Left ventricle myocardium superior (tissue), 1 donor: ENCODE measurements at regions of chr11 and their contacts with region 1.

Region 1: DNA sequence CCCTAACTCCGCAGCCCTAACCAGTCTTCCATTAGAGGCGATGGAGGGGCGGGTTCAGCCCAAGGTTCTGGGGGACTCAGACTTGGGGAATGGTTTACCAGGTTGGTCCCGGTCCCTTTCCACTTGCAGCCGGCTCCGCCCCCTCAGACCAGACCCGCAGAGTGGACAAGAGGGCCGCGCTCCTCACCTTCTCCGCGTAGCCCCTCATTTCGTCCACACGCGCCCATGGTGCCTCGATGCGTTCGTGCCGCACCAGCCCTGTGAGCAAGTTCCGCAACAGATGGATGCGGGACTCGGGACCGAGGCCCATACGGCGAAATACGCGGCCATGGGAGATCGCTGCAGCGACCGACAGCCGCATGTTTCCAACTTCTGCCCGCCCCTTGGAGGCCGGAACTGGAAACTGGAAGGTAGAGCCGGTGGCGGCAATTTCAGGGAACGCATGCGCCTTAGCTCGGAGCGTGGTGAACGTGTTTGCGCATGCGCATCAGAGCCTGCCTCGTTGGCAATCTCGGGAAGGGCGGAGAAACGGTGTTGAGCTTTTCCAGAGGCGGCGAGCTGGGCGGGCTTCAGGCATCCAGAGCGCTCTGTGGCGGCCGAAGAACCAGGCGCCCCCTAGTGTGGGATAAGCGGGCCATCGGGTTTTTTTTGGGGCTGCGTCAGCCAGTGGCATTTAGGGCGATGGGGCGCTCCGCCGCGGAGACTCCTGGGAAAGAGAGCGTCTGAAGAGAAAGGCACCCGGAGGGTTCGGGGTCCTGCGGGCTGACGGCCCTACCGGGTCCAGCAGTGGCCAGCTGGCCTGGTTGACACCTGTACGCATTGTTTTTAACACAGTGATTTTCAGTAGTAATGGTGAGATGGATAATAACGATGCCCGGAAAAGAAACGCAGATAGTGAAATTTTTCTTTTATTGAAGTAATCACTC is at the start of gene MRPL17:
- DNase-seq: peak; percentile 99
- ATAC-seq: peak; percentile 97
- total RNA-seq, gene MRPL17: 49.7 TPM

Region 2: GRCh38 chr11:6612213-6613041 is 70.8 kb before region 1 on chr11 and contains the start of gene TAF10:
- intact Hi-C with region 1: loop called (anchors 2 kb)
- DNase-seq: peak; percentile 99
- ATAC-seq: peak; percentile 94
- total RNA-seq, gene TAF10: 89.4 TPM

Region 3: DNA sequence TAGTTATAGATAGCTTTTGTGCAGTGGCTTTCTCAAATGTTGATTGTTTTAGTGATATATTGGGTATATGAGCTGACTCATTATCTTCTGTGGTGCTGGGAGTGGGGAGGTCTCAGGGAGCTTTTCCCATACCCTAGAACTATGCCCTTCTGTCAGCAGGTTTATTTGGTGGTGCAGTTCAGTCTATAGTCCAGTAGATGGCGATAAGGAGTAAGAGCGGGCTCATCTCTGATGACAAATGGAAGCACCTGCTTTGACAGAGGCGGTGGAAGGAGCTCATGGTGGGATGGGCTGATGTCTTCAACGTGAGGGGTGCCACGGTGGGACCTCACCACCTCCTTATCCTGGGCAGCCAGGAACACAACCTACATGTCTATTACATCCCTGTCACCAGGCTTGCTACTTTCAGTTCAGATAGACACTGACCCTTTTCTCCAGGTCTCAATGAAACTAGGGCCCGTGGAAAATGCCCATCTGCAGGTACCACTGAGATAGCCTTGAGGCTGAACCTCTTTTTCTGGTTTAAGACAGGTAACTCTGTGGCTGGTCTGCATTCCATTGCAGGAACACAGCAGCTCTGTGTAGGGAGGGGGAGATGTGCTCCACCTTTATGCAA is 129.3 kb after region 1 on chr11:
- intact Hi-C with region 1: no loop called
- DNase-seq: no peak
- ATAC-seq: no peak